ENCODE measurements at regions of chr10 and their contacts with region 1.

Region 1: DNA sequence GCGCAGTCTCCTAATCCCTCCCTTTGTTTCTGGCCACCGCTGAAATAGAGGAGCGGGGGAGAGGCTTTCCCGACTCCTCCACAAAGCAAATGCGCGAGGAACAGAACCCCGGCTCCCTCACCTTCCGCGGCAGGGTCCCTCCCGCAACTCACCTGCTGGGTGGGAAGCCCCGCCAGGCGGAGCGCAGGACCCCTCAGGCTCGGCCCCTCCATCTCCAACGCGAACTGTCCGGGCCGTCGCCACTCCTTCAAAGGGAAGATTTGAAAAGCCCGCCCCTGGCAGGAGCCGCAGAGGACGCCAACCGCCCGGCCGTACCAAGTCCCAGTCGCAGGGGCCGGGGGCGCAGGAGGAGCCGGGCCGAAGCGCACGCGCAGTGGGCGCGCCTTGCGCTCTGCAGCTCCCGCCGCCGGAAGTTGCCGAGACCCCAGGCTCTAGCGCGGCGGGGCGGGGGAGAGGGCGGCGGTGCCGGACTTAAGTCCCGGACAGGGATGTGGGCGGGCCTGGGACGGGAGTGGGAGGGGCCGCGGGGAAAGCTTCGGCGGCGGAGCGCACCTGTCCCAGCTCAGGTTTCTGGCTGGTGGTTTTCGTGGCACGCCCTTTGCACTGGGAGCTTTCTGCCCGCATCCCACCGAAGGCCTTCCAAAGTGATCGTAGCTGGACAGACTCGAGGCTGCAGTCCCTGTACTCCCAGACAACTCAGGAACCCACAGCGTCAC is at the start of gene RTKN2:
- DNase-seq: peak; percentile 100
- ATAC-seq: peak; percentile 81
- H3K4me3 ChIP-seq: peak within 1 kb of the TSS; percentile 75
- H3K27ac ChIP-seq: peak within 1 kb of the TSS; percentile 12
- H3K4me1 ChIP-seq: peaks cover 45% of the 10 kb centered on the region
- H3K27me3 ChIP-seq: no peaks in the 10 kb centered on the region
- CTCF ChIP-seq: no peak
- total RNA-seq, gene RTKN2: 24.8 and 26.6 TPM in 2 replicates

Region 2: GRCh38 chr10:61529208-61529607 is 739.3 kb before region 1 on chr10:
- CTCF ChIA-PET with region 1: interaction called, 14 read pairs
- POLR2A ChIA-PET with region 1: no interaction called
- intact Hi-C with region 1: no loop called
- DNase-seq: peak; percentile 100
- ATAC-seq: peak; percentile 100
- H3K4me3 ChIP-seq: peak overlapping the region; percentile 3; the same call in 1 of the 2 replicates
- H3K27ac ChIP-seq: no peak overlapping the region
- H3K4me1 ChIP-seq: peaks cover 14% of the 10 kb centered on the region
- H3K27me3 ChIP-seq: no peaks in the 10 kb centered on the region
- CTCF ChIP-seq: no peak

Region 3: GRCh38 chr10:62373995-62374861 is 105.7 kb after region 1 on chr10 and contains the start of gene ZNF365:
- CTCF ChIA-PET with region 1: no interaction called
- POLR2A ChIA-PET with region 1: interaction called, 3 read pairs
- intact Hi-C with region 1: loop called (anchors 1 kb)
- DNase-seq: peak; percentile 89
- ATAC-seq: peak; percentile 79
- H3K4me3 ChIP-seq: peak within 1 kb of the TSS; percentile 75
- H3K27ac ChIP-seq: no peak within 1 kb of the TSS
- H3K4me1 ChIP-seq: peaks cover 45% of the 10 kb centered on the region
- H3K27me3 ChIP-seq: no peaks in the 10 kb centered on the region
- CTCF ChIP-seq: no peak; the same call in 1 of the 2 replicates
- total RNA-seq, gene ZNF365: 19.0 and 20.2 TPM in 2 replicates

Region 4: GRCh38 chr10:62414359-62414758 is 145.8 kb after region 1 on chr10:
- CTCF ChIA-PET with region 1: interaction called, 34 read pairs
- POLR2A ChIA-PET with region 1: interaction called, 16 read pairs
- intact Hi-C with region 1: loop called (anchors 1 kb)
- DNase-seq: peak; percentile 88
- ATAC-seq: peak; percentile 57
- H3K4me3 ChIP-seq: no peak overlapping the region
- H3K27ac ChIP-seq: no peak overlapping the region
- H3K4me1 ChIP-seq: peaks cover 9% of the 10 kb centered on the region
- H3K27me3 ChIP-seq: no peaks in the 10 kb centered on the region
- CTCF ChIP-seq: peak; percentile 91

Region 5: GRCh38 chr10:62492012-62492869 is 223.7 kb after region 1 on chr10:
- CTCF ChIA-PET with region 1: interaction called, 4 read pairs
- POLR2A ChIA-PET with region 1: no interaction called
- intact Hi-C with region 1: loop called (anchors 2 kb)
- DNase-seq: peak; percentile 92
- ATAC-seq: peak; percentile 90
- H3K4me3 ChIP-seq: no peak overlapping the region
- H3K27ac ChIP-seq: no peak overlapping the region
- H3K4me1 ChIP-seq: no peaks in the 10 kb centered on the region
- H3K27me3 ChIP-seq: peaks cover 7% of the 10 kb centered on the region; the same call in 1 of the 2 replicates
- CTCF ChIP-seq: peak; percentile 100

Region 6: GRCh38 chr10:63268798-63269503 is 1000.4 kb after region 1 on chr10:
- CTCF ChIA-PET with region 1: no interaction called
- POLR2A ChIA-PET with region 1: no interaction called
- intact Hi-C with region 1: loop called (anchors 10 kb)
- DNase-seq: peak; percentile 100
- ATAC-seq: peak; percentile 90
- H3K4me3 ChIP-seq: peak overlapping the region; percentile 69
- H3K27ac ChIP-seq: peak overlapping the region; percentile 76
- H3K4me1 ChIP-seq: peaks cover 38% of the 10 kb centered on the region
- H3K27me3 ChIP-seq: no peaks in the 10 kb centered on the region
- CTCF ChIP-seq: peak; percentile 63

Measured in PC-3 (cell line).